ENCODE measurements at regions of chr12 and their contacts with region 1.

Region 1: GRCh38 chr12:124036674-124037109 is 63.7 kb downstream of the ZNF664 start:
- DNase-seq: peak in 3 of 6 donors; percentile 36 to 68 (median 57)
- ATAC-seq: peak in 3 of 4 donors; percentile 64 to 72 (median 69)
- H3K4me3 ChIP-seq: no peak overlapping the region
- H3K27ac ChIP-seq: no peak overlapping the region
- H3K4me1 ChIP-seq: peaks cover 0 to 9% (median 0%) of the 10 kb centered on the region in 3 donors
- H3K27me3 ChIP-seq: no peaks in the 10 kb centered on the region
- CTCF ChIP-seq: peak; percentile 73 to 92 (median 90)

Region 2: GRCh38 chr12:124213666-124214347 is 177.1 kb after region 1 on chr12:
- intact Hi-C with region 1: no loop called
- DNase-seq: no peak
- ATAC-seq: no peak
- H3K4me3 ChIP-seq: no peak overlapping the region
- H3K27ac ChIP-seq: no peak overlapping the region
- H3K4me1 ChIP-seq: no peaks in the 10 kb centered on the region
- H3K27me3 ChIP-seq: no peaks in the 10 kb centered on the region
- CTCF ChIP-seq: no peak

Region 3: GRCh38 chr12:124321040-124321481 is 284.4 kb after region 1 on chr12:
- intact Hi-C with region 1: loop called in 2 of 3 experiments (anchors 2 to 5 kb)
- DNase-seq: peak; percentile 36 to 90 (median 72)
- ATAC-seq: peak; percentile 75 to 94 (median 86)
- H3K4me3 ChIP-seq: no peak overlapping the region
- H3K27ac ChIP-seq: no peak overlapping the region
- H3K4me1 ChIP-seq: no peaks in the 10 kb centered on the region
- H3K27me3 ChIP-seq: no peaks in the 10 kb centered on the region
- CTCF ChIP-seq: peak; percentile 78 to 85 (median 82)

Measured in pancreas (tissue), 10 donors.